Activated CD4-positive, alpha-beta T cell treated with anti-CD3 and anti-CD28 coated beads, Interleukin-2, amount 10 ng/mL, durations not matched to agents 7 days and 5 days (primary cell): ENCODE measurements at regions of chr3 and their contacts with region 1.

Region 1: DNA sequence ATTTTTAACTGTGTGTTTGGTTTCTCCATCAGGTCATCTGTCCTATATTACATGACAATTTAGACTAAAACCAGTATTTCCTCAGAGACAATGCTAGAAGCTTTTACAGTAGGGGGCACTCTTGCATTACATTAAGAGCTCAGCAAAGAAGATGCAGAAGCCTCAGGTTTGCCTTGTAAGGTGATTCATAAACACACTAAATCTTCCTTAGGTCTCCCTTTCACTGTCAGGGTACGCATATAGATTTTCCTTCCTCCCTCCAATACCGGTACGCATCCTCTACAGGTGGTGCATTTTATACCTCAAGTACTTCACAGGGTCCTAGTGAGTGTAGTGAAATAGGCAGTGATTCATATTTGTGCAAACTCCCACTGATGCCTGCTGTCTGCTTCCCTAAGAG is 46.5 kb downstream of the CD86 start:
- DNase-seq: peak; percentile 66
- H3K4me3 Mint-ChIP-seq: no peak overlapping the region
- H3K27ac Mint-ChIP-seq: no peak overlapping the region
- H3K4me1 Mint-ChIP-seq: peaks cover 27% of the 10 kb centered on the region
- H3K27me3 Mint-ChIP-seq: no peaks in the 10 kb centered on the region

Region 2: GRCh38 chr3:122111974-122112373 is 10.3 kb after region 1 on chr3:
- CTCF ChIA-PET with region 1: interaction called, 16 read pairs
- POLR2A ChIA-PET with region 1: no interaction called
- DNase-seq: no peak
- H3K4me3 Mint-ChIP-seq: no peak overlapping the region
- H3K27ac Mint-ChIP-seq: no peak overlapping the region
- H3K4me1 Mint-ChIP-seq: no peaks in the 10 kb centered on the region
- H3K27me3 Mint-ChIP-seq: peaks cover 13% of the 10 kb centered on the region

Region 3: DNA sequence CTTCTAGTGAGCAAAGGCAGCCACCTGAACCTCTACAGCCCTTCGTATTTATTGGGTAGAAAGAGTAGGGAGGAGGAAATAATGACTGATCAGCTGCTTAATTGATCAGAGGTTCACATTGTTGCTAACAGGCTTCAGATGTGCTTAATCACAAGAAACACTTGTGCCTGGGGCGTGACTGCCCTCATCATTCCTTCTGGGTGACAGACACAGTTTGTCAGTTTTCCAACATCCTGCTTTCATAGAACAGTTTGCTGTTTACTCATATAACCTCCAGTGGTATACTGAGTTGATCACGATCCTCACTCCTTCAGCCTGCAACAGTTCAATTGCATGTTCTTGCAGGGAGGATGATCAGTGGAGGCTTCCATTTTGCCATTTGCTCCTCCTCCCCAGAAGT is 68.3 kb after region 1 on chr3:
- CTCF ChIA-PET with region 1: no interaction called
- POLR2A ChIA-PET with region 1: no interaction called
- DNase-seq: no peak
- H3K4me3 Mint-ChIP-seq: no peak overlapping the region
- H3K27ac Mint-ChIP-seq: no peak overlapping the region
- H3K4me1 Mint-ChIP-seq: no peaks in the 10 kb centered on the region
- H3K27me3 Mint-ChIP-seq: peaks cover 2% of the 10 kb centered on the region

Region 4: GRCh38 chr3:122258757-122259371 is 157.2 kb after region 1 on chr3:
- CTCF ChIA-PET with region 1: interaction called, 32 read pairs
- POLR2A ChIA-PET with region 1: no interaction called
- DNase-seq: peak; percentile 55
- H3K4me3 Mint-ChIP-seq: no peak overlapping the region
- H3K27ac Mint-ChIP-seq: no peak overlapping the region
- H3K4me1 Mint-ChIP-seq: peaks cover 16% of the 10 kb centered on the region
- H3K27me3 Mint-ChIP-seq: peaks cover 2% of the 10 kb centered on the region